ENCODE measurements at regions of chr1 and their contacts with region 1.

Region 1: DNA sequence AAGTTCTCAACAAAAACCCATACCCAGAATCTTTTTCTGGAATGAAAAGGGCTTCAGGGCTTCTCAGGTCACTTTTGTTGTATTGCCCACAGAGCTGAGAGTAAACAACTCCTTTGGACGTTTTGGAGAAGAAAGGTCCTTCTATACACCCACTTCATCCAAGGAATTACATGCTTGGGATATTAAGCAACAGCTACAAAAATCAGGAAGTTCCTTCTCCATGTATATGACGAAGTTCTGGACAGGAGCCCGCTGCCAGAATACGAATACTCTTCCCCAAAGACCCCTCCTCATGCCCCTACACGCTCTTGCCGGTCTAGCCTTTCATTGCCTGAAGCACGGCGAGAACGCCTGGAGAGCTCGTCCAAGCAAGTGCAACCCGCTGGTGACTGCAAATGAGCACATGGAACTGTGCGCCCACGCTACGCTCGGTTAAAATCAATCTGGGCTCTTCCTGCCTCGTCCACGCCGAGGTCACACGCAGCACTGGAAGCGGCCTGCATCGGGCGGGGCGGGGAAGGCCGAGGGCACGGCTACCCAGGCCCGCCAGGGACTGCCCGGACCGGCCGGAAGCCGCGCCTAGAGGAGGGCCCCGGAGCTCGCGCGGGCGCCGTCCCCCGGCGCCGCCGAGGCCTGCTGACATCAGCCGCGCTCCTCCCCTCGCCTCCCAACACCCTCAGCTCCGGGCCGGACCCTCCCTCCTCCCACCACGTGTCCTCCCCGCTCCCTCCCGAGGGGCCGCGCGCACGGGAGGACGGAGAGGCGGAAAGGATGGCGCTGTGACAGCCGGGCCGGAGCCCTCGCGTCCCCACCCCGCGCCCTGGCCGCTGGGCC is at the start of gene POGK:
- DNase-seq: peak; percentile 96 to 97
- ATAC-seq: peak; percentile 97
- H3K4me3 ChIP-seq: peak within 1 kb of the TSS; percentile 89 to 92
- H3K27ac ChIP-seq: peak within 1 kb of the TSS; percentile 94
- H3K4me1 ChIP-seq: peaks cover 6 to 8% of the 10 kb centered on the region in 2 donors
- H3K27me3 ChIP-seq: no peaks in the 10 kb centered on the region
- total RNA-seq, gene POGK: 38.0 to 40.4 TPM

Region 2: DNA sequence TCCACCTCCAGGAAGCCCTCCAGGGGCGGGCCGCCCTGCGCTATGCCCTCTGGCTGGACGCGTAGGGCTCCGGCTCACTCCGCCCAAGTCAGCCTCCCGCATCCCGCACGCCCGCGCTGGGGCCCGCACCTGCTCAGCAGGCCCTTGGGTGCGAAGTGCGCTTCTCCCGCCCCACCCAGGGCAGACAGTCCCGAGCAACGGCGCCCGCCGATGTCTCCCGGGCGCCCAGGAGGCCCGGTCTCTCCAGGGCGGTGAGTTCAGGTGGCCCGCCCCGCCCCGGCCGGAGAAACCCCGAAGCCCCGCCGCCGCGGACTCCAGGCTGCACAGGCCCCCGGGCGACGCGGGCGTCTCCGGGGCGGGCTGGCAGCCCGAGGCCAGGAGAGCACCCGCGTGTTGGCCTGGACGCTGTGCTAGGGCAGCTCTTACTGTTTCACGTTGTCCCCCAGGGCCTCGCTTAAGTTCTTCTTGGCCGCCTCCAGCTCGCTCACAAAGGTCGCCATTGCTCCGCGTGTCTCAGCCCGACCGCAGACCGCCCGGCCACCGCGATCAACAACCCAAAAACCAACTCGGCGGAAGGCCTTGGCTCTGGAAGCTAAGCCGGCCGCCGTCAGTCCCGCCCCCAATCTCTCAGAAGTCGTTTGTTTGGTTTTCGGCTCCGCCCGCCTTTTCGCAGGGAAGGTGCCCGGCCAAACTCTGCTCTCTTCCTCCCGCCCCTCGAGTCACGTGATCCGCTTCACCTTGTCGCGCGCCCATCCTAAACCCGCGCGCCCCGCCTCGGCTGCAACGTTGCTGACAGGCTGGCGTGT is 37.0 kb after region 1 on chr1 and contains the start of gene TADA1:
- intact Hi-C with region 1: loop called in 1 of 2 experiments (anchors 2 kb)
- DNase-seq: peak; percentile 99 to 100
- ATAC-seq: peak; percentile 98
- H3K4me3 ChIP-seq: peak within 1 kb of the TSS; percentile 52 to 95
- H3K27ac ChIP-seq: peak within 1 kb of the TSS; percentile 49 to 69
- H3K4me1 ChIP-seq: no peaks in the 10 kb centered on the region
- H3K27me3 ChIP-seq: no peaks in the 10 kb centered on the region
- total RNA-seq, gene TADA1: 7.0 to 9.4 TPM

Region 3: GRCh38 chr1:166975361-166976129 is 136.6 kb after region 1 on chr1 and contains the start of gene ILDR2:
- intact Hi-C with region 1: loop called in 1 of 2 experiments (anchors 5 kb)
- DNase-seq: peak; percentile 53 to 86
- ATAC-seq: peak; percentile 64
- H3K4me3 ChIP-seq: peak within 1 kb of the TSS; percentile 90 to 98
- H3K27ac ChIP-seq: no peak within 1 kb of the TSS
- H3K4me1 ChIP-seq: no peaks in the 10 kb centered on the region
- H3K27me3 ChIP-seq: no peaks in the 10 kb centered on the region
- total RNA-seq, gene ILDR2: 0.42 to 0.66 TPM

Measured in aorta (tissue), 5 donors.